GM12878 (cell line): ENCODE measurements at regions of chr1 and their contacts with region 1.

Region 1: GRCh38 chr1:226731257-226731893 is 7.7 kb downstream of the ITPKB start:
- DNase-seq: no peak
- ATAC-seq: peak; percentile 13
- H3K4me3 ChIP-seq: peak overlapping the region; percentile 65
- H3K27ac ChIP-seq: peak overlapping the region; percentile 45
- H3K4me1 ChIP-seq: peaks cover 36% of the 10 kb centered on the region
- H3K27me3 ChIP-seq: no peaks in the 10 kb centered on the region
- CTCF ChIP-seq: no peak
- EP300 ChIP-seq: no peak
- POLR2A ChIP-seq: no peak
- RAD21 ChIP-seq: no peak

Region 2: DNA sequence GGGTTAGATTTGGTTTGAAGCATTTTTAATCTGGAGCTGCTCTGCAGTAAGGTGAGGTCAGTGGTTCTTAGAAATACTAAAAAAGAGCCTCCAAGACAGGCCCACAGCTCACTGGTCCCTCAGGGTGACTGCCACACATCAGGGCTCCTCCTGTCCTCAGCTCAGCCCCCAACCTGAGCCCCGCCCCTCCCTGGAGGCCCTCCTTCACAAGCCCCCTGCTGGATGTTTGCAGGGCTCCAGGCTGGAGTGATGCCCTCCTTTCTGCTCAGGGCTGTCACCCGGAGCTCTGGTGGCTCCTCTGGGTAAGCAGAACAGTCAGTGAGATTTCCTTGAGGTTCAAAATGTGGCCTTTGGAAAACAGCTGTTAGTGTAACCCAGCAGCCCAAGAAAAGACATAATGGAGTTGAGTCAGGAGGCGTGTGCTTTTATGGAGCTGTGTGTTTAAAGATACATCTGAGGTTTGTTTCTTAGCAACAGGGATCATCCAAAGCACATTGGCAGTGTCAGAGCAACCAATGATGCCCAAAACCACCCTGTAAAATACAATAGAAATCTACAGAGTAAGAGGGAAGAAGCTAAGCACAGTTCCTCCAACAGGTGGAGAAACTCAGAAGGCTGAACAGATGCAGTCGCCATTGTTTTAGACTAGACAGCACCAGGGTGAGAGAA is 161.4 kb before region 1 on chr1:
- CTCF ChIA-PET with region 1: no interaction called
- POLR2A ChIA-PET with region 1: no interaction called
- RAD21 ChIA-PET with region 1: no interaction called
- SMC1A ChIA-PET with region 1: no interaction called
- in situ Hi-C with region 1: no loop called
- intact Hi-C with region 1: no loop called
- DNase-seq: no peak
- ATAC-seq: peak; percentile 94
- H3K4me3 ChIP-seq: no peak overlapping the region
- H3K27ac ChIP-seq: no peak overlapping the region
- H3K4me1 ChIP-seq: no peaks in the 10 kb centered on the region
- H3K27me3 ChIP-seq: peaks cover 3 to 4% of the 10 kb centered on the region in 2 experiments; a peak in 2 of 4 replicates
- CTCF ChIP-seq: peak in 2 of 3 experiments; percentile 32 to 33; a peak in 3 of 6 replicates
- EP300 ChIP-seq: no peak
- POLR2A ChIP-seq: no peak
- RAD21 ChIP-seq: no peak

Region 3: GRCh38 chr1:226662642-226663326 is 68.6 kb before region 1 on chr1:
- CTCF ChIA-PET with region 1: no interaction called
- POLR2A ChIA-PET with region 1: interaction called, 5 read pairs
- RAD21 ChIA-PET with region 1: interaction called, 16 read pairs
- SMC1A ChIA-PET with region 1: interaction called, 11 read pairs
- in situ Hi-C with region 1: no loop called
- intact Hi-C with region 1: loop called (anchors 2 kb)
- DNase-seq: peak; percentile 99
- ATAC-seq: peak; percentile 95
- H3K4me3 ChIP-seq: peak overlapping the region; percentile 5; the same call in 1 of the 2 replicates
- H3K27ac ChIP-seq: peak overlapping the region; percentile 48
- H3K4me1 ChIP-seq: peaks cover 57% of the 10 kb centered on the region
- H3K27me3 ChIP-seq: no peaks in the 10 kb centered on the region
- CTCF ChIP-seq: no peak
- EP300 ChIP-seq: peak; percentile 98
- POLR2A ChIP-seq: no peak
- RAD21 ChIP-seq: peak; percentile 14; the same call in 1 of the 2 replicates

Region 4: DNA sequence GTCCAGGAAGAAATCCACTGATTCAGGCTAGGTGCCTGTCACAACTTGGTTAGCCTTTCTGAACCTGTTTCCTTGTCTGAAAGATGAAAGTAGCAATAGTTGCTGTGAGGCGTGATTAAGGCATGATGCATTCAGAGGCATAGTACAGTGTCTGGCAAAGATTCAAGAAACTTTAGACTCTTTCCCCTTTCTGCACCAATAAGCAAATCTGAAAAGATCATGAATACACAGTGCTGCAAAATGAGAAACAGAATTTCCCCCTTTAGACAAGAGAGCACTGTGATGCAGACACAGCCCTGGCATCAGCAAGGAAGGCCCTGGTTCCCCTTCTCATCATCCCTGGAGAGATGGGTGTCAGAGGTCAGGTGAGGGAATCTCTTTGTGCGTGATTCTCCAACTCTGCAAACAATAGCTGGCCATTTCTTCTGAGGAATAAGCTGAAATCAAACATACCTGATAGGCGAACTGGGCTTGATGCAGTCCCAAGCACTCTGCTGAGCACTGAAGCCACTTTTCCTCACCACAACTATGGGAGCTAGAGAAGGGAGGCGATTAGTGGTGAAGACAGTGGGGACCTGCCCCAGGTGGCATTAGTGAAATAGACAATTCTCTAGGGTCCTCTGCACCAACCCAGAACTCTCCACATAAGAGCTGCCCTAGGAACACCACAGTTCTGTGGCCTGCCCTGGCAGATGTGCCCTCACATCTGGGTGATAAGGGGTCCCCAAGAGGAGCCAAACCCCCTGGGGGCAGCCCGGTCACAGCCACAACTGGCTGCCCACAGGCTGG is 34.0 kb before region 1 on chr1:
- CTCF ChIA-PET with region 1: interaction called, 4 read pairs
- POLR2A ChIA-PET with region 1: interaction called, 20 read pairs
- RAD21 ChIA-PET with region 1: interaction called, 6 read pairs
- SMC1A ChIA-PET with region 1: interaction called, 13 read pairs
- in situ Hi-C with region 1: no loop called
- intact Hi-C with region 1: no loop called
- DNase-seq: peak; percentile 67
- ATAC-seq: peak; percentile 85
- H3K4me3 ChIP-seq: no peak overlapping the region
- H3K27ac ChIP-seq: peak overlapping the region; percentile 60
- H3K4me1 ChIP-seq: peaks cover 29% of the 10 kb centered on the region
- H3K27me3 ChIP-seq: no peaks in the 10 kb centered on the region
- CTCF ChIP-seq: no peak
- EP300 ChIP-seq: peak in 1 of 2 experiments; percentile 54; a peak in 1 of 4 replicates
- POLR2A ChIP-seq: no peak
- RAD21 ChIP-seq: no peak

Region 5: DNA sequence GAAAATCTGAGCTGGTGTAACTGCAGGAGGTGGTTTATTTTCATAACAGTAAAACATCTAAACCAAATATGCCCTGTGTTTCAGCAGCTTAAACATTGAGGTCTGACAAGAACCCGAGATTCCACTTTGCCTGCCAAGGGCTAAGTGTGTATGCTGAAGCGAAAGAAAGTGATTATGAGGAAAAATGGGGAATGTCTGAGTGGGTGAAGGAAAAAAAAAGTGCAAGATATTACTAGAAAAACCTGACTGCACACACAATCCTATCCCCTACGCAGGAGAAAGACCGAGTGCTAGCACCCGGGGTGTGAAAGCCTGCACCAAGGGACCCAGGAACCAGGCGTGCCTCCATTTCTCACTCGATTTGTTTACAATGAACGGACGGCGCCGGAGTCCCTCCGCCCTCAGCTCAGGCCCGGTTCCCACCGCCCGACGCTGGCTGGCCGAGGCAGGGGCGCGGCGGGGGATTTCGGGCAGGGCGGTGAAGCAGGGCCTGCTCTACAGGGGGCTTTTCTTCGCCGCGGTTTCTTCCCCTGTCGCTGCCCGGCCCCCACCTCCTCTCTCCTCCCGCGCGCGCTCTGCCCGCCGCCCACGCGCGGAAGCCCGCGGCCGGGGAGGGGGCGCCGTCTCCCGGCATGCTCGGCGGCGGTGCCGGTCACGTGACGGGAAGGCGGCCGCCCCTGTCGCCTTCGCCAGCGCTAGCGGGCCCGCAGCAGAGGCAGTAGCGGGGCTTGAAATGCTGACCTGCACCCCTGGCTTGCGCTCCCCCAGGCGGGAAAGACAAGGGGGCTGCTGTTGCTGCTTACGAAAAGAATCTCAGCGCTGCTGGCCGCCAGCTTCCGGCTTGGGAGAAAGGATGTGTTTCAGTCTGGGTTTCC is 28.2 kb before region 1 on chr1:
- CTCF ChIA-PET with region 1: interaction called, 4 read pairs
- POLR2A ChIA-PET with region 1: interaction called, 20 read pairs
- RAD21 ChIA-PET with region 1: interaction called, 6 read pairs
- SMC1A ChIA-PET with region 1: interaction called, 13 read pairs
- in situ Hi-C with region 1: no loop called
- intact Hi-C with region 1: no loop called
- DNase-seq: no peak
- ATAC-seq: peak; percentile 92
- H3K4me3 ChIP-seq: peak overlapping the region; percentile 54
- H3K27ac ChIP-seq: peak overlapping the region; percentile 92
- H3K4me1 ChIP-seq: peaks cover 12% of the 10 kb centered on the region
- H3K27me3 ChIP-seq: no peaks in the 10 kb centered on the region
- CTCF ChIP-seq: no peak
- EP300 ChIP-seq: peak in 1 of 2 experiments; percentile 41; a peak in 1 of 4 replicates
- POLR2A ChIP-seq: peak; percentile 93
- RAD21 ChIP-seq: no peak

Region 6: DNA sequence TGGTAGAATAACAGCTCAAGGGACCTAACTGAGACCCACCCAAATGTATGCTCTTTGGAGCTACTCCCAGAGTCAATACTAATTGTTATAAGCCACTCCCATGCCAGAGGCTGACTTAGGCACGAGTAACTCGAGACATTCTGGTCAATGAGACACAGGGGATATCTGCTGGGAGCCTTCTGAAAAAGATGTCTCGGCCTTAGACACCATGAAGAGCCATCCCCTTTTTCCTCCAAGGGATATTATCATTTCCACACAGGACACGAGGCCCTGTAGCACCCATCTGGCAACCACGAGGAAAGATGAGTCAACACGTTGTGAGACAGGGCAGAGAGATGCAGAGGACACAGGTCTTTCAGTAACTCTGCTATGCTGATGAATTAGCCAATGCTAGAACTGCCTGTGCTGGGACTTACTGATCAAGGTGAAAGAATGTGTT is 23.0 kb before region 1 on chr1:
- CTCF ChIA-PET with region 1: interaction called, 6 read pairs
- POLR2A ChIA-PET with region 1: interaction called, 20 read pairs
- RAD21 ChIA-PET with region 1: interaction called, 8 read pairs
- SMC1A ChIA-PET with region 1: interaction called, 21 read pairs
- in situ Hi-C with region 1: no loop called
- intact Hi-C with region 1: loop called (anchors 2 kb)
- DNase-seq: no peak
- ATAC-seq: no peak
- H3K4me3 ChIP-seq: no peak overlapping the region
- H3K27ac ChIP-seq: no peak overlapping the region
- H3K4me1 ChIP-seq: peaks cover 27% of the 10 kb centered on the region
- H3K27me3 ChIP-seq: no peaks in the 10 kb centered on the region
- CTCF ChIP-seq: no peak
- EP300 ChIP-seq: no peak
- POLR2A ChIP-seq: no peak
- RAD21 ChIP-seq: no peak

Region 7: DNA sequence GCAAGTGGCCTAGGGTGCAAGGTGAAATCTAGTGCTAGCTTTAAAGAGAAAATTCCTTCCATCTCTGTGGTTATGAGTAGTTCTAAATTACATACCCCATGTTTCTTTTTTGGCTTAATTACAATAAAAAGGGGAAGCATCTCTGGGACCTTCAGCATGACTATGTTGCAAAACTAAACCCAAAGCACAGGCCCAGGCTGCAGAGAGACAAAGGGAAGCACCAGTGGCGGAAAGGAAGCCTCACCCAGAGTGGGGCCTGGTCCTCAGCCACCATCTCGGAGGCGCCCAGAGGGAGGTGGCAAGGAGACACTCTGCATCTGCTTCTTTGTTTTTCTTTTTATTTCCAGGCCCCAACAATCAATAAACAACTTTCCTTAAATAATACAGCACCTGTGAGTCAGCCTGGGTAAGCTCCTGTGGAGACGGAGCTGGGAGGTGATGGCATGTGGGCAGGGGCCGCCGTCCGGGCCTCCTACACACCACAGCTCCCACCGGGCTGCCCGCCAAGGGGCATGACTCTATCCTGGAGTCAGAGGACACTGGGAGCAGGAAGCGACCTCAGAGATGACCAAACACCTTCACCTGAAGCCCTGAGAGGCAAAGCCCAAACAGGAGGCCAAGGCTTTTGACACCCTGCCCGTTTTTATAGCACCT is 14.0 kb before region 1 on chr1:
- CTCF ChIA-PET with region 1: interaction called, 6 read pairs
- POLR2A ChIA-PET with region 1: interaction called, 16 read pairs
- RAD21 ChIA-PET with region 1: interaction called, 8 read pairs
- SMC1A ChIA-PET with region 1: interaction called, 21 read pairs
- in situ Hi-C with region 1: no loop called
- intact Hi-C with region 1: loop called (anchors 2 kb)
- DNase-seq: no peak
- ATAC-seq: 0 out of 3 replicates have a peak, but pooled peaks have one; percentile 21
- H3K4me3 ChIP-seq: no peak overlapping the region
- H3K27ac ChIP-seq: no peak overlapping the region
- H3K4me1 ChIP-seq: peaks cover 11% of the 10 kb centered on the region
- H3K27me3 ChIP-seq: no peaks in the 10 kb centered on the region
- CTCF ChIP-seq: no peak
- EP300 ChIP-seq: no peak
- POLR2A ChIP-seq: no peak
- RAD21 ChIP-seq: no peak